Posterior cingulate gyrus (tissue), 11 donors: ENCODE measurements at regions of chr7 and their contacts with region 1.

Region 1: DNA sequence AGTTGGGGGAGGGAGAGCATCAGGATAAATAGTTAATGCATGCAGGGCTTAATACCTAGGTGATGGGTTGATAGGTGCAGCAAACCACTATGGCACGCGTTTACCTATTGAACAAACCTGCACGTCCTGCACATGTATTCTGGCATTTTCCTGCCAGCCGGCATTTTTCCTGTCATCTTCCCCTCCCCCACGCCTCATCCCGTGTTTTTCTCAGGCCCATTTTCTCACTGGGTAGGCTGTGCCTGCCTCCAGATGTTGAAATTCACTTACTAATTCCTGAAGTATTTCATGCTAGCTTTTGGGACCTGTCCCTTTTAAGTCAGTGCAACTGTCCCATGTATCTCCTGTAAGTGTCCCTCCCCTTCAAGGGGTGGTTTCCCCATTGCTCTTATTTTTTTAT is 220.3 kb upstream of the NPY start:
- DNase-seq: no peak

Region 2: GRCh38 chr7:23721456-23721855 is 342.3 kb before region 1 on chr7:
- intact Hi-C with region 1: no loop called
- DNase-seq: no peak

Region 3: GRCh38 chr7:24039991-24040624 is 23.6 kb before region 1 on chr7:
- intact Hi-C with region 1: loop called (anchors 2 kb)
- DNase-seq: no peak